CD8-positive, alpha-beta T cell (primary cell): ENCODE measurements at regions of chr4 and their contacts with region 1.

Region 1: DNA sequence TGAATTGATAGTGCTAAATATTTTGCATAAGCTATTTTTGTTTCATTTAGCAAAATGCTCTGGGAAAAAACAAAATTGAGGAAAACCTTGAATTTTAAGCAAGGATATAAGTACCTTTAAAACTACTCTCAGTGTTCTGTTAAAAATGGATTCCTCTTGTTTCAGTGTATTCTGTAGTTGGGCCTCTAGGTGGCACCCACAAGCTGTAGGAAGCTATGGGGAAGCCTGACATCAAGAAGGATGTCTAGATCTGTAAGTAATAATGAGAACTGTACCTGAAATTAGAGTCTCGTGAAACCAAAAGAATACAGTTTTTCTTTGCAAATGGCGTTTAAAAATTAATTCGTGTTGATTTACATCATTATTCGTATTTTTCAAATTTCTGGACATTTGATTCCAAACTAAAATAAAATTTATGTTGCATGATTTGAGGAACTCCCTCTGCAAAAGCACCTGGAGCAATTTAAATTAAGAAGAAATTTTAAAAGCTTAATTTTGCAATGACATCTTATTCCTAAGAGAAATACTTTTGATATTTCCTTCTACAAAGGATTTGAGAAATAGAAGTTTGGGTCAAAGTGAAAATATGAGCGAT is 51.2 kb downstream of the TMPRSS11E start:
- DNase-seq: peak; percentile 18 to 72 (median 54)
- ATAC-seq: peak; percentile 99
- H3K4me3 ChIP-seq: no peak overlapping the region
- H3K4me3 Mint-ChIP-seq: no peak overlapping the region
- H3K27ac ChIP-seq: no peak overlapping the region
- H3K27ac Mint-ChIP-seq: no peak overlapping the region
- H3K4me1 ChIP-seq: no peaks in the 10 kb centered on the region
- H3K4me1 Mint-ChIP-seq: peaks cover 9% of the 10 kb centered on the region
- H3K27me3 ChIP-seq: no peaks in the 10 kb centered on the region
- H3K27me3 Mint-ChIP-seq: no peaks in the 10 kb centered on the region
- CTCF ChIP-seq: peak; percentile 88

Region 2: DNA sequence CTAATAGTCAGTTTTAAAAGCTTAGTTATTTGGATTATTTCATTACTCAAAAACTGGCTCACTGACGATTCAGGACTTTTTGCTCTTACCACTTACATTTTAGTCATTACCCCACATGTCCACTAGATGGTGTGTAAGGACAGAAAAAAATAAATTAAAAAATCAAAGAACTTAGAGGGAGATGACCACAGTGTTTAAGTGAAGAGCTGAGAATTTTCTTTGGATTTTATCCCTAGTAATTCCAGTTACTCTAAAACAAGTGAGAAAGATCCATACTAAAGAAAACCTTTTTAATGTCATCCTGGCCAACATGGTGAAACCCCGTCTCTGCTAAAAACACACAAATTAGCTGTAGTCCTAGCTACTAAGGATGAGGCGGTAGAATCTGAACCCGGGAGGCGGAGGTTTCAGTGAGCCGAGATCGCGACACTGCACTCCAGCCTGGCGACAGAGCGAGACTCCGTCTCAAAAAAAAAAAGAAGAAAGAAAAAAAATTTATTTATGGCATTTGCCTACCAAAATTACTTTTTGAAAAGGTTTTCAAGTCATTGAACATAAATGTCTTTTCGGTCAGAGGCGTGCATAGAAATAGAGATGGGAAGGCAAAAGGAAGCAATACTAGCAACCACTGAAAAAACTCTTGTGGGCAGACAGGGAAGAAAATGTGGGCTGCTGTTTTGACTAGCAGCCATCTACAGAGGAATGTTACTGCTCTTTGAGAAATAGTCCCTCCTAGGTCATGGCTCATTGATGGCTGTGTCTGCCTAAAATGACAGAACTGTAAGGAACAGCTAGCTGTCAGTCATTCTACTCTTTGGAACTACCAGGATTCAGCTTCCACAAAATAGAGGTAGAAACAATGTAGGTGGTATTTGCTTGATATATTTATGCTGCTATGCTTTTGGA is 226.4 kb before region 1 on chr4:
- CTCF ChIA-PET with region 1: no interaction called
- POLR2A ChIA-PET with region 1: no interaction called
- intact Hi-C with region 1: loop called (anchors 1 to 5 kb)
- DNase-seq: peak in 2 of 9 experiments; percentile 52 to 64
- ATAC-seq: peak; percentile 81
- H3K4me3 ChIP-seq: no peak overlapping the region
- H3K4me3 Mint-ChIP-seq: no peak overlapping the region
- H3K27ac ChIP-seq: no peak overlapping the region
- H3K27ac Mint-ChIP-seq: no peak overlapping the region
- H3K4me1 ChIP-seq: no peaks in the 10 kb centered on the region
- H3K4me1 Mint-ChIP-seq: no peaks in the 10 kb centered on the region
- H3K27me3 ChIP-seq: no peaks in the 10 kb centered on the region
- H3K27me3 Mint-ChIP-seq: peaks cover 9% of the 10 kb centered on the region
- CTCF ChIP-seq: peak; percentile 93

Region 3: GRCh38 chr4:68581383-68582338 is 83.2 kb after region 1 on chr4:
- CTCF ChIA-PET with region 1: no interaction called
- POLR2A ChIA-PET with region 1: no interaction called
- intact Hi-C with region 1: no loop called
- DNase-seq: no peak
- ATAC-seq: no peak
- H3K4me3 ChIP-seq: no peak overlapping the region
- H3K4me3 Mint-ChIP-seq: no peak overlapping the region
- H3K27ac ChIP-seq: no peak overlapping the region
- H3K27ac Mint-ChIP-seq: no peak overlapping the region
- H3K4me1 ChIP-seq: no peaks in the 10 kb centered on the region
- H3K4me1 Mint-ChIP-seq: no peaks in the 10 kb centered on the region
- H3K27me3 ChIP-seq: no peaks in the 10 kb centered on the region
- H3K27me3 Mint-ChIP-seq: peaks cover 3% of the 10 kb centered on the region
- CTCF ChIP-seq: no peak

Region 4: DNA sequence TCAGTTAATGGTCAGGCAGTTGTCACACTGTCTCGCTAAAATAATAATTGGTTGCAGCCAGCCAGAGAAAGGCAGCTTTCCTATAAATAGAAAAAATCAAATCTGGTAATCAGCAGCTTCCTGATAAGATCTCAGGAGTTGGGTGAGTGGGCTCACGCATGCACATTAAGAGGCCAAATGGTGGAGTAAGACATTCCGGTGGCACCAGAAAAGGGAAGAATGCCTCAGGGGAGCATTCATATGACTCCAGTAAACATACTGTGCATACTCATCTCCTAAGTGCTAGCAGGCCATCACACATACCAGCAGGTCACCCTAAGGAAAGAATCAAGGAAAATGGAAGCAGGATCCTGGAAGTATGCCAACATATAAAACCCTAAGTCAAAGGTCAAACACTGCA is 131.9 kb after region 1 on chr4:
- CTCF ChIA-PET with region 1: no interaction called
- POLR2A ChIA-PET with region 1: no interaction called
- intact Hi-C with region 1: loop called in 1 of 2 experiments (anchors 1 kb)
- DNase-seq: no peak
- ATAC-seq: no peak
- H3K4me3 ChIP-seq: no peak overlapping the region
- H3K4me3 Mint-ChIP-seq: no peak overlapping the region
- H3K27ac ChIP-seq: no peak overlapping the region
- H3K27ac Mint-ChIP-seq: no peak overlapping the region
- H3K4me1 ChIP-seq: no peaks in the 10 kb centered on the region
- H3K4me1 Mint-ChIP-seq: no peaks in the 10 kb centered on the region
- H3K27me3 ChIP-seq: no peaks in the 10 kb centered on the region
- H3K27me3 Mint-ChIP-seq: peaks cover 3% of the 10 kb centered on the region
- CTCF ChIP-seq: no peak

Region 5: DNA sequence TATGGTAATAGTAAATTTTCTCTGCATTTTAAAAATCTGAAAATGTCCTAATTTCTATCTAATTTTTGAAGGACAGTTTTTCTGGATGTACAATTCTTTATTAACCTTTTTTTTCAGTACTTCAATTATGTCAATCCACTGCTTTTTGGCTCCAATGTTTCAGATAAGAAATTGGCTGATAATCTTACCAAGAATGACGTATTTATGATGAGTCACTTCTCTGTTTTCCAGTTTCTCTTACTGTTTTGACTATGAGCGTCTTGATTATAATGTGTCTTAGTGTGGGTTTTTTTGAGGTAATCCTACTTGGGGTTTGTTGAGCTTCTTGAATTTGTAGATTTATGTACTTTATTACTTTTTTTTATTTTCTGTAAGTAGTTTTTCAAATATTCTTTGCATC is 668.8 kb after region 1 on chr4:
- CTCF ChIA-PET with region 1: interaction called, 3 read pairs
- POLR2A ChIA-PET with region 1: no interaction called
- intact Hi-C with region 1: loop called in 1 of 2 experiments (anchors 2 kb)
- DNase-seq: no peak
- ATAC-seq: no peak
- H3K4me3 ChIP-seq: no peak overlapping the region
- H3K4me3 Mint-ChIP-seq: no peak overlapping the region
- H3K27ac ChIP-seq: no peak overlapping the region
- H3K27ac Mint-ChIP-seq: no peak overlapping the region
- H3K4me1 ChIP-seq: no peaks in the 10 kb centered on the region
- H3K4me1 Mint-ChIP-seq: no peaks in the 10 kb centered on the region
- H3K27me3 ChIP-seq: no peaks in the 10 kb centered on the region
- H3K27me3 Mint-ChIP-seq: no peaks in the 10 kb centered on the region
- CTCF ChIP-seq: no peak

Region 6: GRCh38 chr4:69881173-69881773 is 1382.8 kb after region 1 on chr4:
- CTCF ChIA-PET with region 1: interaction called, 3 read pairs
- POLR2A ChIA-PET with region 1: no interaction called
- intact Hi-C with region 1: loop called in 1 of 2 experiments (anchors 5 kb)
- DNase-seq: peak in 4 of 9 experiments; percentile 13 to 57 (median 24)
- ATAC-seq: peak; percentile 78
- H3K4me3 ChIP-seq: no peak overlapping the region
- H3K4me3 Mint-ChIP-seq: no peak overlapping the region
- H3K27ac ChIP-seq: no peak overlapping the region
- H3K27ac Mint-ChIP-seq: no peak overlapping the region
- H3K4me1 ChIP-seq: no peaks in the 10 kb centered on the region
- H3K4me1 Mint-ChIP-seq: no peaks in the 10 kb centered on the region
- H3K27me3 ChIP-seq: no peaks in the 10 kb centered on the region
- H3K27me3 Mint-ChIP-seq: no peaks in the 10 kb centered on the region
- CTCF ChIP-seq: peak; percentile 90